Calu3 (cell line): ENCODE measurements at regions of chr3 and their contacts with region 1.

Region 1: DNA sequence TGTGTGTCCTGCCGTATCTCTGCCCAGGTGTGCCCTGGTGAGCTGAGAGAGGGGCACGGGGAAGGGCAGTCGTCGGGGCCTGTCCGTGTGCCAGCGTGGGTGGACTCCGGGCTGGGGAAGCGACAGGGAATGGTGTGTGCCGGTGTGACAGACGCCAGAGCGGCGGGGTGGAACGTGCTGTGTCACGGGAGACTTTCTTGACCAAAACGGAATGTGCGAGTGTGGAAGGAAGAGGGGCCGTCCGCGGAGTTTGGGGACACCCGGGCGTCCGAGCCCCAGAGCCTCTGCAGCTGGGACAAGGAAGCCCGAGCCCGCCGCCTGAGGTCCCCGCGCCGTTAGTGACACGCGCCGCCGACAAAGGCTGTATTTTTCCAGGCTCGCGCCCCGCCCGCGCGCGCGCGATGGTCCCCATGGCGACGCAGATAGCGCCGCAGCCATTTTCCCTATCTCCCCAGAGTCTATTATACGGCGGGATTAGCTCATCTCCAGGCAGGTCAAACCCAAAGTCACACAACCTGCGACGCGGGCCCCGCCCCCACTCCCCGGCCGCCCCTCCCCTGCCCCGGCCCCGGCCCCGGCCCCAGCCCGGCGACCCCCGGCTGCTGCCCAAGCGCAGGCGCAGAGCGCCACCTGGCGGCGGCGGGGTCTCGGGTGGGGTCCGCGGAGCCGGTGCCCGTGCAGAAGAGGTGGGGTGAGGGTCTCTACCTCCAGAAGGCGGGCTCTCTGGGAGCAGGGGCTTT is 4.6 kb upstream of the GATA2 start:
- DNase-seq: peak; percentile 90
- H3K4me3 Mint-ChIP-seq: peak overlapping the region; percentile 70
- H3K27ac Mint-ChIP-seq: no peak overlapping the region
- H3K4me1 Mint-ChIP-seq: peaks cover 13% of the 10 kb centered on the region
- H3K27me3 Mint-ChIP-seq: no peaks in the 10 kb centered on the region
- CTCF ChIP-seq: peak; percentile 98

Region 2: DNA sequence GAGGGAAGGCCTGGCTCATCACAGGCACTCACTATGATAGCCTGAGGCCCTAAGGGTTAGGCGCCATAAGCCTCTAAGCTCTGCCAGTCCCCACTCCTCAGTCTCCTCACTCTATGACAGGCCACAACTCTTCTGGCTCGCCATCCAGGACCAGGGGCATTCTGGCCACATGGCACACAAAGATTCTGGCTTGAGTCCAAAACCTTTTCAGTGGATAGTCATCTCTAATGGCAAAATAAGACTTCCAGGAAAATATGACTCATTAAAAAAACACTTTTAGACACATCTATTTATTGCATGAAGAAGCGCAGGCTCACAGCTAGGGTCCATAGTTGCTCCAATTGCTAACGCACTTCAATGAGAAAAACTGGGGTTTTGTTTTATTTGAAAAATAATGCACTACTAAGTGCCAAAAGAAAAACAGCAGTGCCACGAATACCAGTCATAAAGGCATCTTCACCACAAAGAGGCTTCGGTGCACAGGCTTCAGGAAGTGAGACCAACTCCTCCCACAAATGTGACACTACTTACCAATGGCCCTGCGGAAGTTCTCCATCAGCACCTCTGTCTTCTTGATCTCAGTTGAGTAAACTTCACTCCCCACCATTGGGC is 385.1 kb before region 1 on chr3:
- CTCF ChIA-PET with region 1: no interaction called
- intact Hi-C with region 1: no loop called
- DNase-seq: no peak
- H3K4me3 Mint-ChIP-seq: no peak overlapping the region
- H3K27ac Mint-ChIP-seq: no peak overlapping the region
- H3K4me1 Mint-ChIP-seq: peaks cover 28% of the 10 kb centered on the region
- H3K27me3 Mint-ChIP-seq: no peaks in the 10 kb centered on the region
- CTCF ChIP-seq: no peak

Region 3: DNA sequence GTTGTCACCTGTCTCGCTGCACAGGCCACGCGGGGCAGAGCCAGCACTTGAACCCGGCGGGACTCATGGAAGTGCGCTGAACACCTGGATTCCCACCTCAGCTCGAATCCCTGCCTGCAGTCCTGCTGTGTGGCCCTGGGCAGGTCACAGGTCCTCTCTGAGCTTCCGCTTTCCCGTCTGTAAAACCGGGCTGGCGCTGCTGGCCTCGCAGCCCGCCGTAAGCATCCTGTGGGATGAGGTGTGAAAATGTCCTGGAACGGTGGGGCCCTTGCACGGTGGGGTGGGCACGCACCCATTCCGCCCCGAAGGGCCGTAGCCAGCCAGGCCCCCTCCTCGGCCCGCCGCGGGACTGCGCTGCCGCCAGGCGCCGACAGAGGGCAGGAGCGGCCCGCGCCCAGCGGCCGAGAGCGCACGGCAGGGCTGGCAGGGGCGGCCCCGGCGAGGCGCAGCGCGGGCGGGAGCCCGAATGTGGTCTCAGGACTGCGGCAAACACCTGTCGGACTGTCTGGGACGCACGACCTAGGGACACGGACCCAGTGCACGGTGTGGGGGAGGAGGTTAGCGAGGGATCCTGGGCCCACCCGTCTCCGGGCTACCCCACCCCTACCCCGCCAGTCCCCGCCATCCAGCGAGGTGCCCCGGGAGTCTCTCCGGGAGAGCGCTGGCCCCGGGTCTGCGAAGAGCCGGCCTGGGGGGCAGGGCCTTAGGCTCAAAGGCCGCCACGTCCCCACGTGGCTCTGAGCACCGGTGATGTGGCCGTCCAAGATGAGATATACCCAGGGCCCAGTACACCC is 71.2 kb before region 1 on chr3:
- CTCF ChIA-PET with region 1: interaction called, 6 read pairs
- intact Hi-C with region 1: loop called (anchors 1 kb)
- DNase-seq: peak; percentile 88
- H3K4me3 Mint-ChIP-seq: peak overlapping the region; percentile 22
- H3K27ac Mint-ChIP-seq: no peak overlapping the region
- H3K4me1 Mint-ChIP-seq: peaks cover 16% of the 10 kb centered on the region
- H3K27me3 Mint-ChIP-seq: peaks cover 33% of the 10 kb centered on the region
- CTCF ChIP-seq: peak; percentile 98

Region 4: DNA sequence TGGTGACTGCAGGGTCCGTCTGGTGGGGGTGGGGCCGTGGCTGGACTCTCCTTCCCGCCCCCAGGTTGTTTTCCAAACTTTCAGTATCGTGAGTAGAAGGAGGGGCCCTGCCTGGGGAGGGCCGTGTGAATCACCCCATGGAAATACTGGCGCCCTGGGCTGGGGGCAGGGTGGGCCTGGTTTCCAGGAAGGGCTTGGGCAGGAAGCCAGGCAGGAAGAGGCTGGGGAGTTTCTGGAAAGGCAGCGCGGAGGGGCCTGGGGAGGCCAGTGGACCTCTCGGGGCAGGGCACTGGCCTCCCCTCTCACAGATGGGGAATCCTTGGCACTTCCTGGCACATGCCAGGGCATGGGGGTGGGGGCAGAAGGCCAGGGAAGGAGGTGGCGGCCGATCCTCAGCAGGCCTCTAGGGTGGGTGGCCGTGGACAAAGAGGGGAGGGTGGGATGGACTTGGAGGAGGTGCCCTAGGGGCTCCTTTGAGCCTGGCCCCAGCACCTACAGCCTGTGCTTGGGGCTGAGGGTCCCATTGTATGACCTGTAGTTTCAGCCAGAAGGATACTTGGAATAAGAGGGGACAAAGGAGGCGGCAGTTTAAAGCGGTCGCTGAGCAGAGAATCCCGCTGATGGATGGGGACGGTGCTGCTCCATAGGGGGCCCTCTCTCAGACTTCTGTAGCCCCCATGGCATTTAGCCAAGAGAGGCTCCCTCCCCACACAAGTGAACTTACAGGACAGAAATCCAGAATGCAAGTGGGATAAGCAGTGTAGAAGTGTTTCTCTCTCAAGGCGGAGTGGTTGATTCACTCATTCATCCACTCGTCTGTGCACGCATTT is 51.9 kb after region 1 on chr3:
- CTCF ChIA-PET with region 1: no interaction called
- intact Hi-C with region 1: no loop called
- DNase-seq: peak; percentile 83
- H3K4me3 Mint-ChIP-seq: peak overlapping the region; percentile 27
- H3K27ac Mint-ChIP-seq: peak overlapping the region; percentile 37
- H3K4me1 Mint-ChIP-seq: peaks cover 9% of the 10 kb centered on the region
- H3K27me3 Mint-ChIP-seq: peaks cover 8% of the 10 kb centered on the region
- CTCF ChIP-seq: no peak